ENCODE measurements at regions of chr15 and their contacts with region 1.

Region 1: GRCh38 chr15:64905119-64905831 is 6.4 kb upstream of the ANKDD1A start:
- DNase-seq: peak; percentile 58 to 79 (median 72)
- ATAC-seq: peak; percentile 84
- H3K4me3 ChIP-seq: peak overlapping the region; percentile 38
- H3K4me3 Mint-ChIP-seq: peak overlapping the region; percentile 22 to 84 (median 74)
- H3K27ac ChIP-seq: no peak overlapping the region
- H3K27ac Mint-ChIP-seq: peak overlapping the region in 6 of 9 donors; percentile 3 to 78 (median 44)
- H3K4me1 ChIP-seq: peaks cover 17 to 21% of the 10 kb centered on the region in 2 donors
- H3K4me1 Mint-ChIP-seq: peaks cover 23 to 44% (median 41%) of the 10 kb centered on the region in 7 donors
- H3K27me3 ChIP-seq: no peaks in the 10 kb centered on the region
- H3K27me3 Mint-ChIP-seq: peaks cover 0 to 14% (median 7%) of the 10 kb centered on the region in 5 donors

Region 2: GRCh38 chr15:64681424-64682024 is 223.8 kb before region 1 on chr15:
- CTCF ChIA-PET with region 1: no interaction called
- POLR2A ChIA-PET with region 1: no interaction called
- intact Hi-C with region 1: loop called in 1 of 2 experiments (anchors 1 kb)
- DNase-seq: no peak
- ATAC-seq: peak; percentile 46
- H3K4me3 ChIP-seq: no peak overlapping the region
- H3K4me3 Mint-ChIP-seq: peak overlapping the region in 1 of 10 donors; percentile 53
- H3K27ac ChIP-seq: no peak overlapping the region
- H3K27ac Mint-ChIP-seq: peak overlapping the region in 6 of 9 donors; percentile 34 to 78 (median 61)
- H3K4me1 ChIP-seq: no peaks in the 10 kb centered on the region
- H3K4me1 Mint-ChIP-seq: peaks cover 0 to 31% (median 4%) of the 10 kb centered on the region in 7 donors
- H3K27me3 ChIP-seq: no peaks in the 10 kb centered on the region
- H3K27me3 Mint-ChIP-seq: no peaks in the 10 kb centered on the region

Region 3: GRCh38 chr15:64809649-64810496 is 95.4 kb before region 1 on chr15:
- CTCF ChIA-PET with region 1: no interaction called
- POLR2A ChIA-PET with region 1: no interaction called
- intact Hi-C with region 1: loop called in 1 of 2 experiments (anchors 1 kb)
- DNase-seq: peak; percentile 21 to 75 (median 47)
- ATAC-seq: peak; percentile 80
- H3K4me3 ChIP-seq: no peak overlapping the region
- H3K4me3 Mint-ChIP-seq: no peak overlapping the region
- H3K27ac ChIP-seq: no peak overlapping the region
- H3K27ac Mint-ChIP-seq: no peak overlapping the region
- H3K4me1 ChIP-seq: peaks cover 0 to 3% of the 10 kb centered on the region in 2 donors
- H3K4me1 Mint-ChIP-seq: peaks cover 0 to 8% (median 4%) of the 10 kb centered on the region in 7 donors
- H3K27me3 ChIP-seq: no peaks in the 10 kb centered on the region
- H3K27me3 Mint-ChIP-seq: peaks cover 0 to 12% (median 0%) of the 10 kb centered on the region in 5 donors

Region 4: GRCh38 chr15:64836023-64836536 is 69.2 kb before region 1 on chr15:
- CTCF ChIA-PET with region 1: interaction called, 9 read pairs
- POLR2A ChIA-PET with region 1: interaction called, 3 read pairs
- intact Hi-C with region 1: loop called in 1 of 2 experiments (anchors 1 kb)
- DNase-seq: no peak
- ATAC-seq: no peak
- H3K4me3 ChIP-seq: no peak overlapping the region
- H3K4me3 Mint-ChIP-seq: peak overlapping the region; percentile 16 to 80 (median 72)
- H3K27ac ChIP-seq: peak overlapping the region; percentile 38
- H3K27ac Mint-ChIP-seq: peak overlapping the region; percentile 44 to 91 (median 81)
- H3K4me1 ChIP-seq: peaks cover 37 to 43% of the 10 kb centered on the region in 2 donors
- H3K4me1 Mint-ChIP-seq: peaks cover 42 to 56% (median 52%) of the 10 kb centered on the region in 7 donors
- H3K27me3 ChIP-seq: no peaks in the 10 kb centered on the region
- H3K27me3 Mint-ChIP-seq: no peaks in the 10 kb centered on the region

Region 5: GRCh38 chr15:64856429-64857145 is 48.7 kb before region 1 on chr15:
- CTCF ChIA-PET with region 1: interaction called, 4 read pairs
- POLR2A ChIA-PET with region 1: no interaction called
- intact Hi-C with region 1: loop called in 1 of 2 experiments (anchors 2 kb)
- DNase-seq: no peak
- ATAC-seq: peak; percentile 19
- H3K4me3 ChIP-seq: no peak overlapping the region
- H3K4me3 Mint-ChIP-seq: peak overlapping the region in 4 of 10 donors; percentile 12 to 48 (median 20)
- H3K27ac ChIP-seq: peak overlapping the region; percentile 17
- H3K27ac Mint-ChIP-seq: peak overlapping the region in 8 of 9 donors; percentile 26 to 91 (median 66)
- H3K4me1 ChIP-seq: peaks cover 8 to 27% of the 10 kb centered on the region in 2 donors
- H3K4me1 Mint-ChIP-seq: peaks cover 38 to 60% (median 56%) of the 10 kb centered on the region in 7 donors
- H3K27me3 ChIP-seq: no peaks in the 10 kb centered on the region
- H3K27me3 Mint-ChIP-seq: no peaks in the 10 kb centered on the region

Region 6: GRCh38 chr15:65020419-65020818 is 115.1 kb after region 1 on chr15:
- CTCF ChIA-PET with region 1: no interaction called
- POLR2A ChIA-PET with region 1: no interaction called
- intact Hi-C with region 1: no loop called
- DNase-seq: no peak
- ATAC-seq: no peak
- H3K4me3 ChIP-seq: no peak overlapping the region
- H3K4me3 Mint-ChIP-seq: no peak overlapping the region
- H3K27ac ChIP-seq: no peak overlapping the region
- H3K27ac Mint-ChIP-seq: no peak overlapping the region
- H3K4me1 ChIP-seq: no peaks in the 10 kb centered on the region
- H3K4me1 Mint-ChIP-seq: peaks cover 0 to 18% (median 6%) of the 10 kb centered on the region in 7 donors
- H3K27me3 ChIP-seq: no peaks in the 10 kb centered on the region
- H3K27me3 Mint-ChIP-seq: no peaks in the 10 kb centered on the region

Measured in naive thymus-derived CD4-positive, alpha-beta T cell (primary cell).